Right cardiac atrium (tissue), 5 donors: ENCODE measurements at regions of chr11 and their contacts with region 1.

Region 1: DNA sequence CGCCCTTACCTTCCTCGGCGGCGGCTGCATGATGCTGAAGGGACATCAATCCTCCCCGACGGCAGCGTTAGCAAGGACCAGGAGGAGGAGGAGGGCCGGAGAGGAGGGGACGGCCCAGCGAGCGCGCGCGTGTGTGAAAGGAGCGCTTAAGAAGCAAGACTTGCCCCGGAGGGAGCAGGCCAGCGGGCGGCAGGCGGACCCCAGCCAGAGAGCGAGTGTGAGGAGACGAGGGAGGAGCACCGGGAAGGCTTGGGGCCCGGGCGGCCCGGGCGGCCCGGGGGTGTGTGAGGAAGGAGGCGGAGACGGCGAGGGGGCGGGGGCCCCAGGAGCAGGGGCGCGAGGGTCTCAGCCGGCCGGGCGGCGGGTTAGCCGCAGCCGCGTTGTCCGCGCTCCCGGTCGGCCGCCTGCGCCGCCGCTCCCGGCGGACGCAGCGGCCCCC is 251 bp downstream of the FCHSD2 start:
- DNase-seq: peak; percentile 85 to 95 (median 93)
- ATAC-seq: peak; percentile 66 to 69
- H3K4me3 ChIP-seq: peak overlapping the region; percentile 66
- H3K27ac ChIP-seq: peak overlapping the region; percentile 59
- H3K4me1 ChIP-seq: no peaks in the 10 kb centered on the region
- H3K27me3 ChIP-seq: no peaks in the 10 kb centered on the region

Region 2: DNA sequence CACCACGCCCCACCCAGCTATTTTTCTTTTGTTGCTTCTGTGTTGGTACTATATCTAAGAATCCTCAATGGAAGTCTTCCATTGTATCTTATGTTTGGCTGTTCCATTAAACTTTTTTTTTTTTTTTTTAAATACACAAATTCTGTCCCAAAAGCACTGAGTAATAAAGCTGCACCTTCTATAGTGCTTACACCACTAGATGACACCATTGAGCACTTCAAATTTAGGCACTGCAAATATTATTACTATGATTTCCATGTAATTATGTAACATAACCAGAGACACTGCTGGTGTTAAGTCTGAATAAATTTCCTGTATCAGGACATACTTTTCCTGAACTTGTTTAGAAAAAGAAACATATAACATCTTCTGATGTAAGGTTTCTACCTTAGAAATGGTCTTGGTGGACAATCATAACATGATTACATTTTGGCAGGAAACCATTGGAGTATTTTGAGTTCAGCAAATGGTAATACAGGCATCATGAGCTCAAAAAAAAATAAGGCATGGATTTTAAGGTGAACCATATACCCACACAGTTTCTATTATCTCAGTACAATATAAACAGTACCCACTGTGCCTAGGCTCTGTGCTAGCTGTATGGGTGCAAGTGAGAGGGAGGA is 217.2 kb before region 1 on chr11:
- intact Hi-C with region 1: loop called in 1 of 4 experiments (anchors 5 kb)
- DNase-seq: no peak
- ATAC-seq: peak; percentile 38 to 44
- H3K4me3 ChIP-seq: no peak overlapping the region
- H3K27ac ChIP-seq: no peak overlapping the region
- H3K4me1 ChIP-seq: peaks cover 5% of the 10 kb centered on the region
- H3K27me3 ChIP-seq: no peaks in the 10 kb centered on the region